ENCODE measurements at regions of chr3 and their contacts with region 1.

Region 1: GRCh38 chr3:53072653-53073552 is 27.0 kb upstream of the SFMBT1 start:
- DNase-seq: peak; percentile 90
- H3K4me3 ChIP-seq: peak overlapping the region; percentile 57 to 90 (median 64)
- H3K27ac ChIP-seq: peak overlapping the region; percentile 76 to 85 (median 78)
- H3K4me1 ChIP-seq: peaks cover 0 to 13% (median 6%) of the 10 kb centered on the region in 4 donors
- H3K27me3 ChIP-seq: no peaks in the 10 kb centered on the region
- CTCF ChIP-seq: peak; percentile 96 to 97 (median 97)
- EP300 ChIP-seq: no peak
- POLR2A ChIP-seq: peak; percentile 18

Region 2: GRCh38 chr3:52742418-52743041 is 330.4 kb before region 1 on chr3:
- in situ Hi-C with region 1: loop called in 1 of 4 experiments (anchors 25 kb)
- intact Hi-C with region 1: no loop called
- DNase-seq: no peak
- H3K4me3 ChIP-seq: no peak overlapping the region
- H3K27ac ChIP-seq: no peak overlapping the region
- H3K4me1 ChIP-seq: no peaks in the 10 kb centered on the region
- H3K27me3 ChIP-seq: no peaks in the 10 kb centered on the region
- CTCF ChIP-seq: peak in 4 of 5 experiments; percentile 36 to 50 (median 41)
- EP300 ChIP-seq: no peak
- POLR2A ChIP-seq: no peak

Region 3: DNA sequence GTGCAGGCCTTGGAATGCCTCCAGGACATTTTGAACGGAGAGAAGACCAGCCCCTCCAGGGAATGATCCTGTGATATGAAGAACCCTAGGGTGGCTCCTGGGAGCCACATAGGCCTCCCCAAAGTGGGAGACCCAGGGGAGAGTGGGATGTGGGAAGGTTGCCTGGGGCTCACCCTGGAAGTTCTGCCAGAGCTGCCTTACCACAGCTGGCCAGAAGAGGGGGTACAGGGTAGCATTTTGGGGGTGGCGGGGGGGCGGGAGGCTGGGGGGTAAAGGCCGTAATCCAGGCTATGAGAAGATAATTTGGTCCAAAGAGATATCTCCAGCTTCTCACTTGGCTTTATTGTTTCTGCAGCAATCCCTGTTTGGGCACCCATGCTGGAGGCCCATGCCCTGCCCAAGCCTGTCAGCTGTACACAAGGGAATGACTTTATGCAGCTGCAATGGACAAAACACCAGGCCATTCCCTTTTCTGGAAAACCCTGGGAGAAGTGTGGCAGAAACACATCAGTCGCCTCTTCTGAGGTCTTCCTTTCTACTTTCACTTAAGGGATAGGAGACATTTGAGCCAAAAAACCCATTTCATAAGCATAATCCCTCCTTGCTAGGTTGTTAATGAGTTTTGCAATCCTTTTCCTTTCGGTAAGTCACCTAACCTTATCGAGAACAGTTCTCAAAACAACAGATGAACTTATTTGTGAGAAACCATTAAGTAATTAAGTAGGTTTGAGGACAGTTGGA is 227.0 kb before region 1 on chr3:
- in situ Hi-C with region 1: loop called in 3 of 4 experiments (anchors 10 to 25 kb)
- intact Hi-C with region 1: no loop called
- DNase-seq: no peak
- H3K4me3 ChIP-seq: no peak overlapping the region
- H3K27ac ChIP-seq: peak overlapping the region; percentile 56 to 77 (median 62)
- H3K4me1 ChIP-seq: peaks cover 0 to 25% (median 4%) of the 10 kb centered on the region in 4 donors
- H3K27me3 ChIP-seq: no peaks in the 10 kb centered on the region
- CTCF ChIP-seq: peak; percentile 18 to 48 (median 31)
- EP300 ChIP-seq: no peak
- POLR2A ChIP-seq: no peak

Region 4: DNA sequence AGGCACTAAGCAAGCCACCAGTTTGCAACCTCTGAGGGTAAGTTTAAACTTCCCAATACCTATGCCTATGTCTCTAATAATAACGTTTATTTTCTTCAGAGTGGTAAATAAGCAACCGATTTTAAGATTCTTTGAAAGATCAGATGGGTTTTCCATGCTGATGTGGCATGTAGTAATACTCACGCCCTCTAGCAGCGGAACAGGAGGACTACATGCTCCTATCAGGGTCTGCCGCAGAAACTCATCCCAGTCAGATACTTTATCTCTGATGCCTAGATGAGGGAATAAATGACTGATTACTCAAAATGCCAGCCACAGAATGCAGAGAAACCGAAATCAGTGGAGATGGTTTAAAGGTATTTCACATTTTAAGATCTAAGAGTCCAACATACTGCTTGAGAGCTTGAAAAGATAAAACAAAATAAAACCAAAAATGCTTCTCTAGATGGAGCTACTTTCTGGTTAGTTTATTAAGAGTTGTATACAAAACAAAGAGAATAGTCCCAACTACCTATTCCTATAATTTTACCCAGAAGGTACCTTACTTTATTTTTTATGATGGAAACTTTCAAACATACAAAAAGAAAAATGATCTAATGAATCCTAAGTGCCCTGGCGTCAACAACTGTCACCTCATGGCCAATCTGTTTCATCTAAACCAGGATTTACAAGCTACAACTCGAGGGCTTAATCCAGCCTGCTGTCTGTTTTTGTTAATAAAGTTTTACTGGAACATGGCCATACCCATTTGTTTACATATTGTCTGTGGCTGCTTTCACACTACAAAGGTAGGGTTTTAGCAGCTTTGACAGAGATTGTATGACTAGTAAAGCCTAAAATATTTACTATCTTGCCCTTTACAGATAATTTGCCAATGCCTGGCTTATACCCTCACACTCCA is 138.0 kb before region 1 on chr3:
- in situ Hi-C with region 1: loop called in 1 of 4 experiments (anchors 25 kb)
- intact Hi-C with region 1: no loop called
- DNase-seq: peak; percentile 45
- H3K4me3 ChIP-seq: no peak overlapping the region
- H3K27ac ChIP-seq: no peak overlapping the region
- H3K4me1 ChIP-seq: peaks cover 0 to 15% (median 0%) of the 10 kb centered on the region in 4 donors
- H3K27me3 ChIP-seq: no peaks in the 10 kb centered on the region
- CTCF ChIP-seq: peak; percentile 59 to 73 (median 69)
- EP300 ChIP-seq: no peak
- POLR2A ChIP-seq: no peak

Measured in transverse colon (tissue), 4 donors.